Sigmoid colon (tissue), 7 donors: ENCODE measurements at regions of chr5 and their contacts with region 1.

Region 1: GRCh38 chr5:146446853-146447733 is at the start of gene TCERG1:
- DNase-seq: peak; percentile 100
- H3K4me3 ChIP-seq: peak within 1 kb of the TSS; percentile 73 to 100 (median 94)
- H3K27ac ChIP-seq: peak within 1 kb of the TSS; percentile 85 to 93 (median 91)
- H3K4me1 ChIP-seq: peaks cover 0 to 30% (median 23%) of the 10 kb centered on the region in 4 donors
- H3K27me3 ChIP-seq: no peaks in the 10 kb centered on the region
- CTCF ChIP-seq: peak; percentile 24 to 75 (median 68)
- EP300 ChIP-seq: no peak
- POLR2A ChIP-seq: no peak
- total RNA-seq, gene TCERG1: 37.7 to 67.3 (median 51.0) TPM

Region 2: GRCh38 chr5:145360936-145361335 is 1086.2 kb before region 1 on chr5:
- intact Hi-C with region 1: no loop called
- DNase-seq: no peak
- H3K4me3 ChIP-seq: no peak overlapping the region
- H3K27ac ChIP-seq: no peak overlapping the region
- H3K4me1 ChIP-seq: no peaks in the 10 kb centered on the region
- H3K27me3 ChIP-seq: no peaks in the 10 kb centered on the region
- CTCF ChIP-seq: no peak
- EP300 ChIP-seq: no peak
- POLR2A ChIP-seq: no peak

Region 3: DNA sequence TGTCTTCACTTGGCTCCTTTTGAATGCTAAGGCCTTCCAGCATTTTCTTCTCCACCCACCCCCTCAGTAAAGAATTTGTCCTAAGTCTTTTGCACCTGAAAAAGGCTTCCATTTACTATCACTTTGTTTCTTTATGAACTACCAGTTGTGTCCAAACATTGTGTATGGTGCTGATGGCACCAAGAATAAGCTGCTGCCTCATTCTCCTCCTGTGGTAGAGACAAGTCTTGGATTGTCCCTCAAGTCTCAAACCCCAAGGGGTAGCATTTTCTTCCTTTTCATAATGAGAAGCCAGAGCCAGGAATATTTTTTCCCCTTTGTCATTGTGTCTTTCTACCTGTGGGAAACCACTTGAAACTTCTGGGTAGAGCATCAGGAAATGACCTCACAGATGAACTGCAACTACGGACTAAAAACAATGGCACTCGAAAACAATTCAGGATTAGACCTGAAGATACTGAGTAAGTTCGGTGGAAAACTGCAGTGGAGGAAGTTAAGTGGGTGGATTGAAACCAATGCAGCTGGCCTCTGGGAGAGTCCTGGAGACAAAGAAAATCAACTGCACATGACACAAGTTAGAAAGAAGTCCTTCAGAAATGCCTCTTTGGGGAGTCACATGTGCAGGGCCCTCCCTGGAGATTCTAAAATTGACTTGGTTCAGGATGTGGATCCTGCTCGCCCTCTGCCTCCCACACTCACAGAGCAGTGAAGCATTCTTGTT is 430.2 kb before region 1 on chr5:
- intact Hi-C with region 1: no loop called
- DNase-seq: no peak
- H3K4me3 ChIP-seq: no peak overlapping the region
- H3K27ac ChIP-seq: no peak overlapping the region
- H3K4me1 ChIP-seq: no peaks in the 10 kb centered on the region
- H3K27me3 ChIP-seq: no peaks in the 10 kb centered on the region
- CTCF ChIP-seq: no peak
- EP300 ChIP-seq: no peak
- POLR2A ChIP-seq: no peak

Region 4: DNA sequence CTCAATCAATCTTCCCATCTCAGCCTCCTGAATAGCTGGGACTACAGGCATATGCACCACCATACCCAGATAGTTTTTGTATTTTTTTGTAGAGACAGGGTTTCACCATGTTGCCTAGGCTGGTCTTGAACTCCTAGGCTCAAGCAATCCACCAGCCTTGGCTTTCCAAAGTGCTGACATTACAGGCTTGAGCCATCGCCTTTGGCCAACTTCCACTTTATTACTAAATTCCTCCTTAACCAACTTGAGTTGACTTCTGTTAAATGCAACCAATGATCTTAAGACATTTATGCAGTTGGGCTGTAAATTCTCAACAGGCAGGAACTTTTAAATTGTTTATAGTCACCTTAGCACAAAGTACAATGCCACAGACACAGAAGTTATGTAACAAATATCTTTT is 267.4 kb before region 1 on chr5:
- intact Hi-C with region 1: loop called (anchors 5 kb)
- DNase-seq: no peak
- H3K4me3 ChIP-seq: no peak overlapping the region
- H3K27ac ChIP-seq: no peak overlapping the region
- H3K4me1 ChIP-seq: peaks cover 0 to 34% (median 19%) of the 10 kb centered on the region in 4 donors
- H3K27me3 ChIP-seq: no peaks in the 10 kb centered on the region
- CTCF ChIP-seq: no peak
- EP300 ChIP-seq: no peak
- POLR2A ChIP-seq: no peak

Region 5: GRCh38 chr5:146203011-146203871 is 243.9 kb before region 1 on chr5 and contains the start of gene RBM27:
- intact Hi-C with region 1: loop called (anchors 10 kb)
- DNase-seq: peak; percentile 99
- H3K4me3 ChIP-seq: peak within 1 kb of the TSS; percentile 68 to 98 (median 88)
- H3K27ac ChIP-seq: peak within 1 kb of the TSS; percentile 83 to 92 (median 86)
- H3K4me1 ChIP-seq: peaks cover 0 to 42% (median 33%) of the 10 kb centered on the region in 4 donors
- H3K27me3 ChIP-seq: no peaks in the 10 kb centered on the region
- CTCF ChIP-seq: no peak
- EP300 ChIP-seq: no peak
- POLR2A ChIP-seq: peak; percentile 54 to 62
- total RNA-seq, gene RBM27: 20.1 to 30.9 (median 25.0) TPM